Activated CD4-positive, alpha-beta T cell treated with anti-CD3 and anti-CD28 coated beads for 36 hours (primary cell): ENCODE measurements at regions of chr12 and their contacts with region 1.

Region 1: DNA sequence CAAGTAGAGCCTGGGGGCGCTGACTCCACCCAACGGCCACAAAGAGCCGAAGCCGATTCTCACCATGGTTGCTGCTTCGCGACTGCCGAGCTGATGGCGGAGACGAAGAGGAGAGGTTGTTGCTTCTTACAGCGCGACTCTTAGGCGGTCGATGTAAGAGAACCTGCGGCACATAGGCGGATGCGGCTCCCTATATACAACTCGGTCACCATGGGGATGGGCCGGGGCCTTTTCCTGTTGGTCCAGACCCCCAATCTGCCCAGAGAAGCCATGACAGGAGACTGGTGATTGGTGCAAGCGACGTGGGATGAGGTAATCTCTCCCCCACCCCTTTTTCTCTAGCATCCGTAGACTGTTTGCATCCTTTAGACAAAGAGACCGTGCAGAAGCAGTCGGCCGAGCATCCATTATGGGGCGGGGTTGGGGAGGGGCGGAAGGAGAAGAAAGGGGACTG is at the start of gene TUBA1A:
- DNase-seq: peak; percentile 97
- ATAC-seq: peak; percentile 95
- H3K4me3 Mint-ChIP-seq: peak within 1 kb of the TSS; percentile 92
- H3K27ac Mint-ChIP-seq: peak within 1 kb of the TSS; percentile 92
- H3K4me1 Mint-ChIP-seq: peaks cover 24% of the 10 kb centered on the region
- H3K27me3 Mint-ChIP-seq: no peaks in the 10 kb centered on the region
- total RNA-seq, gene TUBA1A: 75.7 to 98.5 TPM

Region 2: GRCh38 chr12:49060237-49061156 is 128.4 kb before region 1 on chr12 and contains the start of gene KMT2D:
- CTCF ChIA-PET with region 1: interaction called, 3 read pairs
- POLR2A ChIA-PET with region 1: no interaction called
- intact Hi-C with region 1: loop called in 1 of 2 experiments (anchors 5 kb)
- DNase-seq: peak; percentile 94
- ATAC-seq: peak; percentile 75
- H3K4me3 Mint-ChIP-seq: peak within 1 kb of the TSS; percentile 98
- H3K27ac Mint-ChIP-seq: peak within 1 kb of the TSS; percentile 95
- H3K4me1 Mint-ChIP-seq: peaks cover 45% of the 10 kb centered on the region
- H3K27me3 Mint-ChIP-seq: no peaks in the 10 kb centered on the region
- total RNA-seq, gene KMT2D: 48.3 to 58.2 TPM

Region 3: GRCh38 chr12:49069507-49070346 is 119.2 kb before region 1 on chr12 and contains the start of gene RHEBL1:
- CTCF ChIA-PET with region 1: interaction called, 5 read pairs
- POLR2A ChIA-PET with region 1: interaction called, 6 read pairs
- intact Hi-C with region 1: loop called (anchors 1 to 5 kb)
- DNase-seq: peak; percentile 100
- ATAC-seq: peak; percentile 100
- H3K4me3 Mint-ChIP-seq: peak within 1 kb of the TSS; percentile 94
- H3K27ac Mint-ChIP-seq: peak within 1 kb of the TSS; percentile 91
- H3K4me1 Mint-ChIP-seq: peaks cover 15% of the 10 kb centered on the region
- H3K27me3 Mint-ChIP-seq: no peaks in the 10 kb centered on the region
- total RNA-seq, gene RHEBL1: 6.7 to 13.3 TPM

Region 4: GRCh38 chr12:49110464-49111155 is 78.3 kb before region 1 on chr12 and contains the start of gene LMBR1L:
- CTCF ChIA-PET with region 1: interaction called, 3 read pairs
- POLR2A ChIA-PET with region 1: no interaction called
- intact Hi-C with region 1: loop called (anchors 1 kb)
- DNase-seq: peak; percentile 97
- ATAC-seq: peak; percentile 98
- H3K4me3 Mint-ChIP-seq: peak within 1 kb of the TSS; percentile 96
- H3K27ac Mint-ChIP-seq: peak within 1 kb of the TSS; percentile 98
- H3K4me1 Mint-ChIP-seq: peaks cover 29% of the 10 kb centered on the region
- H3K27me3 Mint-ChIP-seq: no peaks in the 10 kb centered on the region
- total RNA-seq, gene LMBR1L: 45.0 to 48.0 TPM

Region 5: GRCh38 chr12:49200919-49201594 is 12.1 kb after region 1 on chr12:
- CTCF ChIA-PET with region 1: no interaction called
- POLR2A ChIA-PET with region 1: interaction called, 7 read pairs
- intact Hi-C with region 1: loop called in 1 of 2 experiments (anchors 1 kb)
- DNase-seq: no peak
- ATAC-seq: peak; percentile 81
- H3K4me3 Mint-ChIP-seq: peak overlapping the region; percentile 16
- H3K27ac Mint-ChIP-seq: no peak overlapping the region
- H3K4me1 Mint-ChIP-seq: peaks cover 13% of the 10 kb centered on the region
- H3K27me3 Mint-ChIP-seq: peaks cover 2% of the 10 kb centered on the region

Region 6: DNA sequence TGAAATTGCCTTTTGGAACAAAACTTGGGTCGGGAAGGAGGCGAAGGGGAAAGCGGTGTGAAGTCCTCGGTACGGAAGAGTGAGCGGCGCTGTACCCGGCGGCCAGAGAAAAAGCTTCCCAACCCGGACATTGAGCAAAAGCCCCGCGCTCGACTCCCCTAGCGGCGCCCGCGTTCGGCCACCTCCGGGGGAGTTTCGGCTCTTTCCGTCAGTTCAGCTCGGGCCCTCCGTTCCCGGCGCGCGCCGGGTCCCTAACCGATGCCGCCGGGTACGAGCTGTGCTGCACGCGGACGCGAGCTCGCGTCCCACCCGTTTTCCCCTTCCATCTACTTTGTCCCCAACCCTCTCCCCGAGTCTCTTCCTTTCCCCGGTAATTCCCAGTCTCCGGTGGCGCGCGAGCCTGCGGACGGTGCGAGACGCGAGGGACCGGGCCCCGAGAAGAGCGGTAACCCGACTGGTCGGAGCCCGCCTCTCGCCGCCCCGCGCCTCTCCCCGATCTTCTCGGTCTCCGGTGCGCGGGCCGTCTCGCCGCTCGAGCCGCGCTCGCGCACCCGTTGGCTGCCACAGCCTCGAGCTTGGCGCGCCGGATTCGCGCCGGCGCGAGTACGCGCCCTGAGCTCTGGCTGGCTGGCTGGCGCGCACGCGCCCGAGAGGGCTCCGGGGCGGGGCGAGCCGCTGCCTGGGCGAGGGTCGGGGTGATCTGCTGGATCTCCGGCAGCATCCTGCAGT is 177.9 kb after region 1 on chr12:
- CTCF ChIA-PET with region 1: no interaction called
- POLR2A ChIA-PET with region 1: no interaction called
- intact Hi-C with region 1: loop called in 1 of 2 experiments (anchors 2 kb)
- DNase-seq: peak; percentile 94
- ATAC-seq: peak; percentile 86
- H3K4me3 Mint-ChIP-seq: peak overlapping the region; percentile 97
- H3K27ac Mint-ChIP-seq: peak overlapping the region; percentile 99
- H3K4me1 Mint-ChIP-seq: peaks cover 25% of the 10 kb centered on the region
- H3K27me3 Mint-ChIP-seq: no peaks in the 10 kb centered on the region